ENCODE measurements at regions of chr16 and their contacts with region 1.

Region 1: GRCh38 chr16:11370084-11370931 is 25.0 kb downstream of the RMI2 start:
- DNase-seq: peak; percentile 92
- H3K4me3 ChIP-seq: peak overlapping the region; percentile 21
- H3K27ac ChIP-seq: peak overlapping the region; percentile 85
- H3K4me1 ChIP-seq: peaks cover 53% of the 10 kb centered on the region
- CTCF ChIP-seq: no peak

Region 2: GRCh38 chr16:10971560-10971961 is 398.7 kb before region 1 on chr16:
- CTCF ChIA-PET with region 1: no interaction called
- POLR2A ChIA-PET with region 1: no interaction called
- intact Hi-C with region 1: loop called (anchors 5 kb)
- DNase-seq: peak; percentile 66
- H3K4me3 ChIP-seq: no peak overlapping the region
- H3K27ac ChIP-seq: no peak overlapping the region
- H3K4me1 ChIP-seq: no peaks in the 10 kb centered on the region
- CTCF ChIP-seq: peak; percentile 91

Region 3: GRCh38 chr16:11094072-11094856 is 276.0 kb before region 1 on chr16:
- CTCF ChIA-PET with region 1: no interaction called
- POLR2A ChIA-PET with region 1: interaction called, 3 read pairs
- intact Hi-C with region 1: loop called (anchors 5 kb)
- DNase-seq: peak; percentile 69
- H3K4me3 ChIP-seq: no peak overlapping the region
- H3K27ac ChIP-seq: peak overlapping the region; percentile 53
- H3K4me1 ChIP-seq: peaks cover 27% of the 10 kb centered on the region
- CTCF ChIP-seq: no peak

Region 4: DNA sequence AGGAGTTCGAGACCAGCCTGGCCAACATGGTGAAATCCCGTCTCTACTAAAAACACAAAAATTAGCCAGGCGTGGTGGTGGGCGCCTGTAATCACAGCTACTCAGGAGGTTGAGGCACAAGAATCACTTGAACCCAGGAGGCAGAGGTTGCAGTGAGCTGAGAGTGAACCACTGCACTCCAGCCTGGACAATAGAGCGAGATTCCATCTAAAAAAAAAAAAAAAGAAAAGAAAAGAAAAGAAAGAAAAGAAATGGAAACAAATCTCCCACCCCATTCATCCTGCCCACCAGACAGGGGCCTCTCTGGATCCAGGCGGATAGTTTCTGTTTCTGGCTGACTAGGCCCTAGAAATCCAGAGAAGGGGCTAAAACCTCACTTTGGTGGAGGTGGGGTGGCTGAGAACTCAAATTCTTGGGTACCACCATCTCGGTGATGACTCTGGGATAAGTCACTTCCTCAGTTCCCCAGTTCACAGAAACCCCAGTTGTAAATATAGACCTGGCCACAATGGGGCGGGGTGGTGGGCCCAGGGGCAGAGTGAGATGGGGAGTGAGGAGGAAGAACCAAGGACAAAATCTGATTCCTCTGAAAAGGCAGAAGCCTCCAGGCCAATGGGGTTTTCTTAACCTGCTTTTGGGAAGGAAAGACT is 136.5 kb before region 1 on chr16:
- CTCF ChIA-PET with region 1: no interaction called
- POLR2A ChIA-PET with region 1: no interaction called
- intact Hi-C with region 1: no loop called
- DNase-seq: peak; percentile 46
- H3K4me3 ChIP-seq: no peak overlapping the region
- H3K27ac ChIP-seq: no peak overlapping the region
- H3K4me1 ChIP-seq: peaks cover 19% of the 10 kb centered on the region
- CTCF ChIP-seq: peak; percentile 53; the same call in 1 of the 2 replicates

Region 5: GRCh38 chr16:11417487-11417886 is 47.2 kb after region 1 on chr16:
- CTCF ChIA-PET with region 1: no interaction called
- POLR2A ChIA-PET with region 1: no interaction called
- intact Hi-C with region 1: no loop called
- DNase-seq: no peak
- H3K4me3 ChIP-seq: no peak overlapping the region
- H3K27ac ChIP-seq: no peak overlapping the region
- H3K4me1 ChIP-seq: no peaks in the 10 kb centered on the region
- CTCF ChIP-seq: no peak

Region 6: DNA sequence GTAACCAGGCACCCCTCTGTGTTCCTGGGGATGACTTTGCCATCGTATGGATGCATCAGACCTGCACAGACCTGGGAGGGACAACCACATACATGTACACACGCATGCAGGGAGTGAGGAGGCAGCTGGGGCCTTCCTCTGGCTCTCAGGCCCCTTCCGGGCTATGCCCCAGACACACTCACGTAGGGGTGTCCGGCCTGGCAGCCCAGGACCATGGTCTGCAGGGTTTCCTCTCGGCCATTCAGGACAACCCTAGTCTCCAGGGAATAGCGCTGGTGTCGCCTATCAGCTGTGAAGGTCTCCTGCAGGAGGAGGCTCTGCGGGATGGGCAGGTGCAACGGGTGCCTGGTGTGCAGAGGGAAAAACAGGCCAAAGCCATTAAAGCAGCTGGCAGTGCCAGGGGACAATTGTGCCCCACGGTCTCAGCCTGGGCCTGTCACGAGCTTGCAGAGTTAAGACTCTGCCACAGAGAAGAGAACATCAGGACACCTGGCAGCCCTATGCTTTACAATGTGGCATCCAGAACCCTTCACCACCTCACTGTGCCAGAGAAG is 76.3 kb after region 1 on chr16:
- CTCF ChIA-PET with region 1: no interaction called
- POLR2A ChIA-PET with region 1: no interaction called
- intact Hi-C with region 1: no loop called
- DNase-seq: no peak
- H3K4me3 ChIP-seq: no peak overlapping the region
- H3K27ac ChIP-seq: no peak overlapping the region
- H3K4me1 ChIP-seq: no peaks in the 10 kb centered on the region
- CTCF ChIP-seq: no peak

Measured in OCI-LY7 (cell line).